Activated CD8-positive, alpha-beta T cell treated with anti-CD3 and anti-CD28 coated beads for 36 hours (primary cell): ENCODE measurements at regions of chr22 and their contacts with region 1.

Region 1: DNA sequence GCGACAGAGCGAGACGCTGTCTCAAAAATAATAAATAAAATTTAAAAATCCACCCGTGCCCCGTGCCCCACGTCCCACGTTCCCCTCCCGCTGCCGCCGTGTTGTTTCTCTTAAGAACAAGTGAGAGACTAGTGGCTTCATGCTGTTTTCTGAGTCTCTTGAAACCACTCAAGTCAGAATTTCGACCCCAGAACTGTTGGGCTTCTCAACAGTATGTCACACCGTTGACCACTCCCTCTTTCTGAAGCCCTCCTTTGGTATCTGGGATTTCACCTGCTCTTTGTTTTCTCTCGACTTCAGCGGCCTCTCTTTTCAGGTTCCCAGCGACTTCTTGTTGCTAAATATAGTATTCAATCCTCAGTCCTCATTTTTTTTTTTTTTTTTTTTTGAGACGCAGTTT is 974 bp downstream of the PPIL2 start:
- DNase-seq: no peak
- ATAC-seq: no peak
- H3K4me3 Mint-ChIP-seq: peak overlapping the region; percentile 89
- H3K27ac Mint-ChIP-seq: peak overlapping the region; percentile 97
- H3K4me1 Mint-ChIP-seq: peaks cover 27% of the 10 kb centered on the region
- H3K27me3 Mint-ChIP-seq: no peaks in the 10 kb centered on the region
- CTCF ChIP-seq: no peak

Region 2: DNA sequence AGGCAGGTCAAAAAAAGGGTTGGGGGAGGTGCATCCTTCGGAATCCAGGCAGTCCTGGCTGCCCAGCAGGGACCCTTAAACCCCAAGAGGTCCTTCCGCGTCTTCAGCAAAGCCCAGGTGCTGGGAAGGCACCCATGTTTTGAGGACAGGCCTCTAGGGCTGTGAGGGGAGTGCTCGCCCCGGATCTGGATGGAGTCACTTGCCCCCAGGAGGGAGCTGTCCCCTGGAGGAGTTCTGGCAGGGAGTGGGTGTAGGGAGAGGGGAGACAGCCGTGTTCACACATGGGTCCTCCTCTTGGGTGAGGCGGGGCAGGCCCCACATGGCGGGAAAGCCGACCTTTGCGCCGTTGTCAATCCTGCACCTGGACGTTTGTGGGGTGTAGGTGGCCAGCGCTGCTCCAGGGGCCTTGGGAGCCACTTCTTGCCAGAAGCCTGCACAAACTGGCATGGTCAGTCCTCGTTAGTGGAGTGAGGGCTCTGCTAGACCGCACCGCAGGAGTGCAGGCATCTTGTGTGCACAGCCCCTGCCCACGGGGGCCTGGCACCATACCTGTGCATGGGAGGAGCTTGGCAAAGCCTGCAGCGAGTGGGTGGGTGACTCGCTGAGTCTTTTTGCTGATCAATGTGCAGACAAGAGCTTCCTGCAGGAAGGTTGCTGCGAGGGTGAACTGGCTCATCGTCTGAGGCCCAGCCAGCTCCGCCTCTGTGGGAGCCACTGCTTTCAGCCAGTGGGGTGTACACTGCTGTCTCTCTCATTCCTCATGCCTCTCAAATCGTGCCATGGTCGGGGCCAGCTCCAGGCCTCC is 15.0 kb after region 1 on chr22:
- CTCF ChIA-PET with region 1: no interaction called
- POLR2A ChIA-PET with region 1: no interaction called
- intact Hi-C with region 1: no loop called
- DNase-seq: peak; percentile 14
- ATAC-seq: peak; percentile 47
- H3K4me3 Mint-ChIP-seq: no peak overlapping the region
- H3K27ac Mint-ChIP-seq: no peak overlapping the region
- H3K4me1 Mint-ChIP-seq: peaks cover 6% of the 10 kb centered on the region
- H3K27me3 Mint-ChIP-seq: no peaks in the 10 kb centered on the region
- CTCF ChIP-seq: no peak

Region 3: DNA sequence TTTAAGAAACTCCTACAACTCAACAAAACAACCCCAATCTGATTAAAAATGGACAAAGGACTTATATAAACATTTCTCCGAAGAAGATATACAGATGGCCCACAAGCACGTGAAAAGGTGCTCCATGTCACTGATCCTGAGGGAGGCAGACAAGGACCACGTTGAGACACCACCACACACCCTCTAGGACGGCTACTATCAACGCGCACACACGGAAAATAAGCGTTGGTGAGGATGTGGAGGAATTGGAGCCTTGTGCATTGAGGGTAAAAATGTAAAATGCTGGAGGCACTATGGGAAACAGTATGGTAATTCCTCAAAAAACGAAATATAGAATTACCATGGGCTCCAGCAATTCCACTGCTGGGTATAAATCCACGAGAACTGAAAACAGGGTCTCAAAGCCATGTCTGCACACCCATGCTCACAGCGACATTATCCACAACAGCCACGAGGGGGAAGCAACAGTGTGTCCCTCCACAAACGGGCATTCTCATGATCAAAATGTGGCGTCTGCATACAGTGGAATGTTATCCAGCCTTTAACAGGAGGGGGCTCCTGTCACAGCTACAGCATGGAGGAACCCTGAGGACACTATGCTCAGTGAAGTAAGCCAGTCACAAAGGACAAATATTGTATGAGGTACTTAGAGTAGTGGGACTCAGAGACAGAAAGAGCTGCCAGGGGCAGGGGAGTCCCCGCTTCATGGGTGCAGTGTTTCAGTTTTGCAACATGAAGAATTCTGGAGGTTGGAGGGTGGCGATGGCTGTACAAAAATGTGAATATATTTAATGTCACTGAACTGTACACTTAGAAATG is 46.3 kb after region 1 on chr22:
- CTCF ChIA-PET with region 1: no interaction called
- POLR2A ChIA-PET with region 1: no interaction called
- intact Hi-C with region 1: loop called (anchors 5 kb)
- DNase-seq: peak; percentile 76
- ATAC-seq: peak; percentile 94
- H3K4me3 Mint-ChIP-seq: no peak overlapping the region
- H3K27ac Mint-ChIP-seq: no peak overlapping the region
- H3K4me1 Mint-ChIP-seq: peaks cover 7% of the 10 kb centered on the region
- H3K27me3 Mint-ChIP-seq: no peaks in the 10 kb centered on the region
- CTCF ChIP-seq: peak; percentile 92

Region 4: GRCh38 chr22:21927174-21927823 is 260.5 kb after region 1 on chr22:
- CTCF ChIA-PET with region 1: no interaction called
- POLR2A ChIA-PET with region 1: no interaction called
- intact Hi-C with region 1: no loop called
- DNase-seq: no peak
- ATAC-seq: no peak
- H3K4me3 Mint-ChIP-seq: no peak overlapping the region
- H3K27ac Mint-ChIP-seq: no peak overlapping the region
- H3K4me1 Mint-ChIP-seq: no peaks in the 10 kb centered on the region
- H3K27me3 Mint-ChIP-seq: no peaks in the 10 kb centered on the region
- CTCF ChIP-seq: no peak